B cell (primary cell): ENCODE measurements at regions of chr6 and their contacts with region 1.

Region 1: DNA sequence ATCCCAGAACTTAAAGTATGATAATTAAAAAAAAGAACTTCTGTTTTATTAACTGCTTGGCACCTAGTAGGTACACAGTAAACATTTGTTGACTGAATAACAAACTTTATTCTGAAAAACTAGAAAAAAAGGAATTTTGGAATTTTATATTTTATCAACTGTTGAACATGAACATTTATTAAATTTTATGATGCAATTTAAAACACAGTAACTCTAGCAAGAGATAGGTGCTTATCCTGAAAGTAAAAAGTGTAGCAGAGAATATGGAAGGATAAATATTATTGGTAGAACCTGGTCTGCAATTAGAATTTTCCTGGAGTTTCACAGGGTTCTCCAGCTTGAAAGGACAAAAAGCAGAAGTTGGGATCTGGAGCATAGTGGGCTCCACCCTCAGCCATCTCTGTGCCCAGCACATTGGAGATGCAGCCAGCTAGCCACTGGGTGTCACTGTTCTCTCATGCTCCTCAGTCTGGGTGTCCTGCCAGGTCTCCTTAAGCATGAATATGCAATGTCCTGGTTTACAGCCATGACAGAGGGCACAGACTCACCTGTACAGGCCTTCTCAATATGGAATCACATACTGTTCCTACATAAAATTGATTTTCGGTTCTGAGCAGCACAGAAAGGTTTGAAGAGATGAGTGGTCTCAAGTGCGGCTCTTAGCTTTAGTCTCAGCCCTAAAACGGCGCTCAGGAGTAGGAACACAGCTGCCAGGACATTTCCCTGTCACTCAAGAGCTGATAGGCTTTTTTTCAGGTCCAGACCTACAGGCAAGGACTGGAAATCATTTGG is 31.7 kb upstream of the IL20RA start:
- DNase-seq: peak; percentile 81
- ATAC-seq: peak; percentile 99
- H3K4me3 ChIP-seq: no peak overlapping the region
- H3K4me3 Mint-ChIP-seq: no peak overlapping the region
- H3K27ac ChIP-seq: no peak overlapping the region
- H3K27ac Mint-ChIP-seq: no peak overlapping the region
- H3K4me1 ChIP-seq: no peaks in the 10 kb centered on the region
- H3K4me1 Mint-ChIP-seq: peaks cover 3% of the 10 kb centered on the region
- H3K27me3 ChIP-seq: no peaks in the 10 kb centered on the region
- H3K27me3 Mint-ChIP-seq: peaks cover 5% of the 10 kb centered on the region
- CTCF ChIP-seq: peak; percentile 82

Region 2: DNA sequence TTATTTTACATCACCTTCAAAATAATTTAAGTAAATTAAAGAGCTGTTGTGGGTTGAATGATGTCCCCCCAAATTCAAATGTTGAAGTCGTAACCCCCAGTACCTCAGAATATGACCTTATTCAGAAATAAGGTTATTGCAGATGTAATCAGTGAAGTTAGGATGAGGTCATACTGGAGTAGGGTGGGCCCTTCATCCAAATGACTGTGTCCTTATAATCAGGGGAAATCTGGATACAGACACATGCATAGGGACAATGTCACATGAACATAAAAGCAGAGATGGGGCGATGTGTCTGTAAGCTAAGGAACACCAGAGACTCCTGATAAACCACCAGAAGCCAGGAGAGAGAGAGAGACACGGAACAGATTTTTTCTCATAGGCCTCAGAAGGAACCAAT is 18.4 kb before region 1 on chr6:
- CTCF ChIA-PET with region 1: no interaction called
- POLR2A ChIA-PET with region 1: no interaction called
- intact Hi-C with region 1: no loop called
- DNase-seq: no peak
- ATAC-seq: no peak
- H3K4me3 ChIP-seq: no peak overlapping the region
- H3K4me3 Mint-ChIP-seq: no peak overlapping the region
- H3K27ac ChIP-seq: no peak overlapping the region
- H3K27ac Mint-ChIP-seq: no peak overlapping the region
- H3K4me1 ChIP-seq: no peaks in the 10 kb centered on the region
- H3K4me1 Mint-ChIP-seq: no peaks in the 10 kb centered on the region
- H3K27me3 ChIP-seq: peaks cover 0 to 13% (median under 1%) of the 10 kb centered on the region in 4 experiments
- H3K27me3 Mint-ChIP-seq: peaks cover 14% of the 10 kb centered on the region
- CTCF ChIP-seq: no peak

Region 3: GRCh38 chr6:137165375-137166246 is 89.1 kb after region 1 on chr6:
- CTCF ChIA-PET with region 1: interaction called, 29 read pairs
- POLR2A ChIA-PET with region 1: no interaction called
- intact Hi-C with region 1: no loop called
- DNase-seq: peak; percentile 56
- ATAC-seq: peak; percentile 67
- H3K4me3 ChIP-seq: peak overlapping the region in 1 of 5 experiments; percentile 28
- H3K4me3 Mint-ChIP-seq: peak overlapping the region; percentile 59
- H3K27ac ChIP-seq: peak overlapping the region in 1 of 2 donors; percentile 10
- H3K27ac Mint-ChIP-seq: peak overlapping the region; percentile 70
- H3K4me1 ChIP-seq: peaks cover 42 to 56% of the 10 kb centered on the region in 2 donors
- H3K4me1 Mint-ChIP-seq: peaks cover 63% of the 10 kb centered on the region
- H3K27me3 ChIP-seq: no peaks in the 10 kb centered on the region
- H3K27me3 Mint-ChIP-seq: no peaks in the 10 kb centered on the region
- CTCF ChIP-seq: no peak

Region 4: GRCh38 chr6:137271245-137272183 is 195.0 kb after region 1 on chr6:
- CTCF ChIA-PET with region 1: interaction called, 19 read pairs
- POLR2A ChIA-PET with region 1: no interaction called
- intact Hi-C with region 1: no loop called
- DNase-seq: peak; percentile 63
- ATAC-seq: peak; percentile 72
- H3K4me3 ChIP-seq: no peak overlapping the region
- H3K4me3 Mint-ChIP-seq: no peak overlapping the region
- H3K27ac ChIP-seq: no peak overlapping the region
- H3K27ac Mint-ChIP-seq: no peak overlapping the region
- H3K4me1 ChIP-seq: peaks cover 5 to 14% of the 10 kb centered on the region in 2 donors
- H3K4me1 Mint-ChIP-seq: peaks cover 15% of the 10 kb centered on the region
- H3K27me3 ChIP-seq: no peaks in the 10 kb centered on the region
- H3K27me3 Mint-ChIP-seq: no peaks in the 10 kb centered on the region
- CTCF ChIP-seq: peak; percentile 93

Region 5: GRCh38 chr6:137415127-137415833 is 338.8 kb after region 1 on chr6:
- CTCF ChIA-PET with region 1: interaction called, 16 read pairs
- POLR2A ChIA-PET with region 1: no interaction called
- intact Hi-C with region 1: loop called (anchors 1 kb)
- DNase-seq: peak; percentile 81
- ATAC-seq: peak; percentile 97
- H3K4me3 ChIP-seq: peak overlapping the region; percentile 39 to 77 (median 63)
- H3K4me3 Mint-ChIP-seq: peak overlapping the region; percentile 89
- H3K27ac ChIP-seq: peak overlapping the region; percentile 14 to 65
- H3K27ac Mint-ChIP-seq: peak overlapping the region; percentile 43
- H3K4me1 ChIP-seq: peaks cover 8 to 9% of the 10 kb centered on the region in 2 donors
- H3K4me1 Mint-ChIP-seq: peaks cover 10% of the 10 kb centered on the region
- H3K27me3 ChIP-seq: peaks cover 0 to 9% (median 3%) of the 10 kb centered on the region in 4 experiments
- H3K27me3 Mint-ChIP-seq: peaks cover 7% of the 10 kb centered on the region
- CTCF ChIP-seq: peak; percentile 79

Region 6: DNA sequence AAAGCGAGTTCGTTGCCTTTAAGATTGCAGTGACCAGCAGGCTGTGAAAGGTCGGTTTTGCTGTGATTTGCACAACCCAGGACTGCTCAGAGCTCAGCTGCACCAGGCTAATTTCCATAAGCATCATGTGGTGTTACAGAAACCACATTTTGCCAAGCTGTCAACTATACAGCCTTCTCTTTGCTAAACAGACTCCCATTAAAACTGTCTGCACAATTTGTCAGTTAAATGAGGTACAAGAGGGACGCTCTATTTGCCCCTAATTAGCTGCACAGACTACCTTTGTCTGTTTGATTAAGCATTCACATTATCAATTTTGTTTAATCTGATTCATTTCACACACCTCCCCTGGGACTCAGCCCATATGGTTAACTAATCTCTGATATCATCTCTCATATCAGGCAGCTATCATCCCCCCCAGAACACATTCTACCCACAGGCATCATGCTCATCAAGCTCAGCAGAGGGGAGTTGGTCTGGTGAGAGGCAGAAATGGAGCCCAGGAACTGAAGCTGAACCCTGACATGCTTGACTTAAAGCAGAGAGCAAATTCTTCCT is 355.7 kb after region 1 on chr6:
- CTCF ChIA-PET with region 1: no interaction called
- POLR2A ChIA-PET with region 1: no interaction called
- intact Hi-C with region 1: no loop called
- DNase-seq: peak; percentile 64
- ATAC-seq: peak; percentile 67
- H3K4me3 ChIP-seq: peak overlapping the region in 1 of 5 experiments; percentile 42
- H3K4me3 Mint-ChIP-seq: peak overlapping the region; percentile 78
- H3K27ac ChIP-seq: no peak overlapping the region
- H3K27ac Mint-ChIP-seq: peak overlapping the region; percentile 2
- H3K4me1 ChIP-seq: peaks cover 34 to 35% of the 10 kb centered on the region in 2 donors
- H3K4me1 Mint-ChIP-seq: peaks cover 34% of the 10 kb centered on the region
- H3K27me3 ChIP-seq: no peaks in the 10 kb centered on the region
- H3K27me3 Mint-ChIP-seq: no peaks in the 10 kb centered on the region
- CTCF ChIP-seq: no peak

Region 7: DNA sequence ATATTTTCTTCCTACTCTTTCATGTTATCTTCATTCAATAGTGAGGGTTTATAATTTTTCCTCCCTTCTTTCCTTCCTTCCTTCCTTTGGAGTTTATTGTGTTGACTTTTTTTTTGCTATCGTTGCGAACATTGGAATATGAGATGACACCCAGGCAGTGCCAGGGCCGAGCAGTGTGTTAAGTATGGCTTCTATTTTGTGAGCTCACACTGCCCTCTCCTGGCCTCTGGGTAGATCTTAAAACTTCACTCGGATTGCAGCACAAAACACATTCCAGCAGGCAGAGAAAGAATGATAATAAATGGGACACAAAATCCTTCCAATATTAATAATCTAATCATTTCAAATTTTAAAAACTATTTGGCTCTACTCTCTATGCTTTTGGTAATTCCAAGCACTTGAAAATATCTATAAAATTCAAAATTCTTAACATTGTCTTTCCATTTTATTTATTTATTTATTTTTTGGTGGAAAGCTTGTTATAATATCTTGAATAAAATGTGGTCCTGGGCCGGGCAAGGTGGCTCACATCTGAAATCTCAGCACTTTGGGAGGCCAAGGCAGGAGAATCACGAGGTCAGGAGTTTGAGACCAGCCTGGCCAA is 565.1 kb after region 1 on chr6:
- CTCF ChIA-PET with region 1: interaction called, 24 read pairs
- POLR2A ChIA-PET with region 1: no interaction called
- intact Hi-C with region 1: loop called (anchors 1 kb)
- DNase-seq: peak; percentile 78
- ATAC-seq: peak; percentile 73
- H3K4me3 ChIP-seq: no peak overlapping the region
- H3K4me3 Mint-ChIP-seq: no peak overlapping the region
- H3K27ac ChIP-seq: no peak overlapping the region
- H3K27ac Mint-ChIP-seq: no peak overlapping the region
- H3K4me1 ChIP-seq: peaks cover 0 to 8% of the 10 kb centered on the region in 2 donors
- H3K4me1 Mint-ChIP-seq: peaks cover 13% of the 10 kb centered on the region
- H3K27me3 ChIP-seq: no peaks in the 10 kb centered on the region
- H3K27me3 Mint-ChIP-seq: peaks cover 9% of the 10 kb centered on the region
- CTCF ChIP-seq: peak; percentile 78

Region 8: DNA sequence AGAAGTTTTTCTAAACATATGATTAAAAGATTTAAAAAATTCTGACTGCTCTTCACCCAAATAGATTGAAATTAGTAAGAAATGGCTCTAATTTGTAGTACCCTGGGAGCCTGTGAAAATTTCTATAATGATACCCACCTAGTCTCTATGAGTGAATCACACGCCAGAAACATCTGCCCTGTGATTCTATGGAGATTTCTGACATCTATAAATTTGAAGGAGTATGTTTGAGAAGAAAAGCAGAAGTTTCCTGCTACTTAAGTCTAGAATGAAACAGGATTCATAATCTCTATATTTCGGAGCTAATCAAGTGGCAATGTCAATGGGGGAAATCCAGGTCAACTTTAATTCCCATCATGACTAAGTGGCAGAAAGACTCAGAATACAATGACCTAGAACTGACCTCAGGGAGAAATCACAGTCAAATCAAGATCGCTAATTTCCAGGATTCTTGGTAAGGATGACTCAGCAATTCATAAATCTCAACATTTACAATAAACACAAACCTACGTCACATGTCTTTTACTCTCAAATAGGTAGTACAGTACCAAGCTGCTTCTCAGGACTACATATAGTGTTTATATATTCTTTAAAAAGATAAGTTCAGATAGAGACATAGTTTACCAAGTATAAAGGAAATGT is 604.4 kb after region 1 on chr6:
- CTCF ChIA-PET with region 1: no interaction called
- POLR2A ChIA-PET with region 1: no interaction called
- intact Hi-C with region 1: no loop called
- DNase-seq: no peak
- ATAC-seq: no peak
- H3K4me3 ChIP-seq: no peak overlapping the region
- H3K4me3 Mint-ChIP-seq: peak overlapping the region; percentile 11
- H3K27ac ChIP-seq: no peak overlapping the region
- H3K27ac Mint-ChIP-seq: no peak overlapping the region
- H3K4me1 ChIP-seq: no peaks in the 10 kb centered on the region
- H3K4me1 Mint-ChIP-seq: peaks cover 4% of the 10 kb centered on the region
- H3K27me3 ChIP-seq: no peaks in the 10 kb centered on the region
- H3K27me3 Mint-ChIP-seq: peaks cover 24% of the 10 kb centered on the region
- CTCF ChIP-seq: no peak